ENCODE measurements at regions of chr6 and their contacts with region 1.

Region 1: DNA sequence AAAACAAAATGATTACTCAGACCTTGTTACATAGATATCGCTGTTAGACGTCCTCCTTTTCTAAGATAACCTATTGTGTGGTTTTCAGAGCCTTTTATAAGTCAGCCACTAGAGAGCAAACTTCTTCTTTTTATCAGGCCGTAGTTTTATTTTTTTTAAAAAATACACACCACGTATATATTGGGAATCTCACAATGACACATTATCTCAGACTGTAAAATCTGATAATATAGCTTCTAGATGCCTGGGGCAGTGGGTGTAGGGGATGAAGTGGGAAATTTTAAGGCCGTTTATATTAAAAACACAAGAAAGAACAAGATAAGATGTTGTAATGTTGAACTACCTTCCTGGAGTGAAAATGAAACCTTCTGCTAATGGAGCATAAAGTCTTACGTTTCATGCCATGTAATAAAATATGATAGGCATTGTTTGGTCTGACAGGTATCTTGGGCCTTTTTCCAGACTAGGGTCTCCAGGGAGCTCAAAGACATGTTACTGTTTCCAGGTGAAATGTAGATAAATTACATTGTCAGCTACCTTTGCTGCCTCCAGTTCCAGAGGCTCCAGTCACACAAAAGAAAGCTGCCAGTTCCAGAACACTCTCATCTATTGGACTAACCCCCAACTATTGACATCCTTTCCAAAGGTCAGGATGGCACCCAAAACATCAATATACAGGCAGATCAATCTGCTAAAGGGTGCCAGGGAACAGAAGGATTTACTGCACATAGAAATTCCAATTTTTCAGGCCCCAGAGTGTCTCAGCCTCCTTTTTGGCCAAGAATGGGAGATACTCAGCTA is 130.2 kb upstream of the AKIRIN2 start:
- DNase-seq: peak; percentile 40
- CTCF ChIP-seq: peak; percentile 46

Region 2: GRCh38 chr6:87817183-87817582 is 15.0 kb before region 1 on chr6:
- CTCF ChIA-PET with region 1: interaction called, 22 read pairs
- POLR2A ChIA-PET with region 1: no interaction called
- DNase-seq: no peak
- CTCF ChIP-seq: no peak

Region 3: GRCh38 chr6:87848574-87848973 is 16.3 kb after region 1 on chr6:
- CTCF ChIA-PET with region 1: interaction called, 11 read pairs
- POLR2A ChIA-PET with region 1: no interaction called
- DNase-seq: no peak
- CTCF ChIP-seq: no peak

Region 4: DNA sequence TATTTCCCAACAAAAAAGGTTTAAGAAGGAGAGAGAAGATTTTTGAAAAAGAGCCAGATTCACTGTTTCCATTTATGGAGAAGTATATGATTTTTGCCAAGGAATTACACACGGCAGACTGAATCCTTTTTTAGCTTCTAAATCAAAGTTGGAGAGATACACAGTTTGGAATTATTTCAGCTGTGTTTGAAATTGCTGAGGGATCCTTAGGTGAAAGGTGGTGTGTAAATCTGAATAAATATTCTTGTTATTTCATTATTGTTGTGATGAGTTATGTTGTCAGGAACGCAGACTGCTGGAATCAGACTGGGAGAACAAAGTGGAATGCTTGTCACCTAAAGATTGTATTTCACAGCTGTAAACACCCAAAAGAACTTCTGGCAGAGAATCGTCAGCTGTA is 38.3 kb after region 1 on chr6:
- CTCF ChIA-PET with region 1: interaction called, 12 read pairs
- POLR2A ChIA-PET with region 1: no interaction called
- DNase-seq: no peak
- CTCF ChIP-seq: no peak

Region 5: DNA sequence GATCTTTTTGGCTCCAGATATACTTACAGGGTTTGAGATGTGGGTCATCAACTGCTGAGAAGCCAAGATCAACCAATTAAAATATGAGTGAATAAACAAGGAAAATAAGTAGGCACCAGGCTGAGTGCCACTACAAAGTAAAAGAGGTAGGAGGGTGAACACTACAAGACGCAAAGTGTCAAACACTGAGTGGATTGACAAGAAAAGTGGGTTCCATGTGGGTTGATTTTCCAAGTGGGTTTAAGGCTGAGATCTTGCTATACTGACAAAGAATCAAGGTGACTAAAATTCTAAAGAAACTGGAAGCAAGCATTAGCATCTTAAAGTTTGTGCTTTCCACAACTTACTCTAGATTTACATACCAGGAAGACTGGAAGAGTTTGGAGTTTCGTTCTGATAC is 55.0 kb after region 1 on chr6:
- CTCF ChIA-PET with region 1: no interaction called
- POLR2A ChIA-PET with region 1: no interaction called
- DNase-seq: no peak
- CTCF ChIP-seq: no peak

Region 6: DNA sequence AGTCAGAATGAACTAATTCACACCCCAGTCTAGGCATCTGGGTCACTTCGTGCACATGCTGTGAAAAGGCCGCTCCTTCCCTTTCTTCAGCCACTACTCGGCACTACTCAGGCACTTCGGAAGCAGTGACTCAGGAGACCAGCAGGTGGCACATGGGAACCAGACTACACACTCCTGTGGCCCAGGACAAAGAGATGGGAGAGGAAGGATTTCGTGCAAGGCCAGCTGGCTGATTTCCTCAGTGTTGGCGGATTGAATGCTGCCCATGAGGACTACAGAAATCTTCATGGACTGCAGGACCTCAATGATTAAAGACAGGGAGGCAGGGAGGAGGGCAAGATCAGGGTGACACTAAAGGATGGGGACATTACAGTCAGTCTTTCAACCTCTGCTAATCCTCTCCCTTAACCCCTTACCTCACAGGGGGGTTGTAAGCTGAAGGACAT is 97.6 kb after region 1 on chr6:
- CTCF ChIA-PET with region 1: interaction called, 12 read pairs
- POLR2A ChIA-PET with region 1: no interaction called
- DNase-seq: peak; percentile 75
- CTCF ChIP-seq: peak; percentile 91

Region 7: GRCh38 chr6:88238065-88238464 is 405.8 kb after region 1 on chr6:
- CTCF ChIA-PET with region 1: interaction called, 11 read pairs
- POLR2A ChIA-PET with region 1: no interaction called
- DNase-seq: peak; percentile 61
- CTCF ChIP-seq: peak; percentile 62

Measured in GM10248 (cell line).